Activated CD8-positive, alpha-beta T cell treated with anti-CD3 and anti-CD28 coated beads, Interleukin-2, amount 10 ng/mL, durations not matched to agents 7 days and 5 days (primary cell): ENCODE measurements at regions of chrX and their contacts with region 1.

Region 1: DNA sequence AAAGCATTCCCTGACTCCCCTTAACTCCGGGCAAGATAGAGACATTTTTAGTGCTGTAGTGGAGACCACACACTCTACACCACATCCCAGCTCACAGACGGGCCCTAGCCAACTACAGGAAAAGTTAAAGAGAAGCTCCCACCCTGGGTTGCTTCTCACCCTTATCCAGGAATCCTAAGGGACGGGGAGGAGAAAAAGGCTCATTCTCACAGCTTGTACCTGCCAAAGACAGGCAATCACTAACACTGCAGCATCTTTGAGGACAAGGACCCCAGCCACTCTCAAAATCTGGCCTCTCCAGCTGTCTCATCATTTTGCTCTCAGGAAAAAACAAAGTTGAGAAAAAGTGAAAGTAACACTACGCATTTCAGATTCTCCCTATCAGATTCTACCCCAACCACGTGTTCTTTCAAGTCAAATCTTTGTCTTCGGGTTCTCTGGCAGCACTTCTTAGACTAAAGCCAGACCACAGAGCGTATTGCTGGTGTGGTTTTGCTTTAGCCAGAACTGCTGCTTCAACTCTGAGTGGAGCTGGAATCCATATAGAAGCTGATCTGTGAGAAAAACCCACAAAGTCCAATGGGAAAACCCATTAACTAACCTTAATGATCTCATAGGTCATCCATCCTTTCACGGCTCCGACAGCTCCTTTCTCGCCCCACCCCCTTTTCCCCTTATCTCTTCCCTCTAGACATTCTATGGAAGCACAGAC is 605.9 kb upstream of the DIPK2B start:
- DNase-seq: peak; percentile 68
- ATAC-seq: peak; percentile 85
- H3K4me3 Mint-ChIP-seq: peak overlapping the region; percentile 74
- H3K27ac Mint-ChIP-seq: peak overlapping the region; percentile 92
- H3K4me1 Mint-ChIP-seq: peaks cover 78% of the 10 kb centered on the region
- H3K27me3 Mint-ChIP-seq: no peaks in the 10 kb centered on the region

Region 2: GRCh38 chrX:45621376-45622041 is 185.1 kb before region 1 on chrX:
- CTCF ChIA-PET with region 1: no interaction called
- POLR2A ChIA-PET with region 1: no interaction called
- DNase-seq: no peak
- ATAC-seq: no peak
- H3K4me3 Mint-ChIP-seq: no peak overlapping the region
- H3K27ac Mint-ChIP-seq: no peak overlapping the region
- H3K4me1 Mint-ChIP-seq: peaks cover 4% of the 10 kb centered on the region
- H3K27me3 Mint-ChIP-seq: no peaks in the 10 kb centered on the region

Region 3: DNA sequence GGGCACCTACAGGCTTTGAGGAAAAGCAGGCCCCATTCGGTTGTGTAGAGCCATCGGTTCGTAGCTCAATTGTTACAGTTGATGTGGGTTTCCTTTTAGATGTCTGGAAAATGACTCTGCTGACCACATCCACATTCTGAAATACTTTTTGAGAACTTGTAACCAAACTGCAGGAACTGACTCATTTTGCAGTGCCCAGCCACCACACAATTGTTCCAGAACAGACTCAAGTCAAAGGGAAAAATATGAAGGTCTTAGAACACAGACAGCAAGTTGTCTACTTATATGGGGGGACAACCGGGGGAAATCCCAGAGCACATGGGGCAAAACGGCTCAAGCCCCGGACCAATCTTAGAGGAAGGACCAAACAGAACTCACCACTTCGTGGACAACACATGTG is 48.2 kb before region 1 on chrX:
- CTCF ChIA-PET with region 1: interaction called, 7 read pairs
- POLR2A ChIA-PET with region 1: interaction called, 15 read pairs
- DNase-seq: peak; percentile 67
- ATAC-seq: peak; percentile 52
- H3K4me3 Mint-ChIP-seq: peak overlapping the region; percentile 79
- H3K27ac Mint-ChIP-seq: peak overlapping the region; percentile 93
- H3K4me1 Mint-ChIP-seq: peaks cover 68% of the 10 kb centered on the region
- H3K27me3 Mint-ChIP-seq: no peaks in the 10 kb centered on the region

Region 4: DNA sequence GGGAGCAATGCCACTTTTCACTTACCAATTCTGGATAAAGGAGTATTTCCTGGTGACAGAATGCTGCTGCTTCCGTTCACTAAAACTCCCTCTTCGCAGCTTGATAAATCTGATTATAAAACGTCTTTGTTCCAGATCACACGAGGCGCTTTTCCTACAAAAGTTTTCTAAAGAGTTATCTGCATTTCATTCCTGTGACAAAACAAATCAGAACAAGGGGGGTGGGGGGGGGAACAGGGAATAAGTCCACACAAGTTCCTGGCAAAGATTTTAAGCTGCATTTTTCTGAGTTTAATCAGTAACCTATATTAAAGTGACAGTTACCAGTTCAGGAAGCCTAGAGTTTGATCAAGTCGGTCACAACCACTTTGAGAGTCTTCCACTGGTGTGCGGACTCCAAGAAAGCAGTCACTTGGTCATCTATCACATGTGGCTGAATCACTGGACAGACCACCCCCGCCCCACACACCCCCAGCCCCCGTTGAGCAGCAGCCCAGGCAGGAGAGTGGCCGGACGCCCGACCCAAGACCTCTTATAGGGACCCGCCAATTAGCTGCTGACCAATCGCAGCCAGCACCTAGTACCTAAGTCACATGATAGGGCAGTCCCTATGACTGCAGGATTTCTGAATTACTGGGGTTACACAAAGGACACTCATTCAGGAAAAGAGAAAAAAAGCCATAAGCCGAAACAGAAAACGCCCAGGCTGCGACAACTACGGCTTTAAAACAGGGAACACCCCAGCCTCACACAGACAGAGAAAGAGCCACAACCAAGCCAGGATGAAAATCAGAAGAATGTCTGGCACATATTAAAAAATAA is 36.6 kb before region 1 on chrX:
- CTCF ChIA-PET with region 1: interaction called, 20 read pairs
- POLR2A ChIA-PET with region 1: interaction called, 27 read pairs
- DNase-seq: peak; percentile 69
- ATAC-seq: peak; percentile 67
- H3K4me3 Mint-ChIP-seq: peak overlapping the region; percentile 85
- H3K27ac Mint-ChIP-seq: peak overlapping the region; percentile 91
- H3K4me1 Mint-ChIP-seq: peaks cover 54% of the 10 kb centered on the region
- H3K27me3 Mint-ChIP-seq: no peaks in the 10 kb centered on the region

Region 5: GRCh38 chrX:45843518-45843917 is 37.0 kb after region 1 on chrX:
- CTCF ChIA-PET with region 1: interaction called, 68 read pairs
- POLR2A ChIA-PET with region 1: interaction called, 3 read pairs
- DNase-seq: peak; percentile 33
- ATAC-seq: no peak
- H3K4me3 Mint-ChIP-seq: no peak overlapping the region
- H3K27ac Mint-ChIP-seq: no peak overlapping the region
- H3K4me1 Mint-ChIP-seq: peaks cover 44% of the 10 kb centered on the region
- H3K27me3 Mint-ChIP-seq: no peaks in the 10 kb centered on the region

Region 6: DNA sequence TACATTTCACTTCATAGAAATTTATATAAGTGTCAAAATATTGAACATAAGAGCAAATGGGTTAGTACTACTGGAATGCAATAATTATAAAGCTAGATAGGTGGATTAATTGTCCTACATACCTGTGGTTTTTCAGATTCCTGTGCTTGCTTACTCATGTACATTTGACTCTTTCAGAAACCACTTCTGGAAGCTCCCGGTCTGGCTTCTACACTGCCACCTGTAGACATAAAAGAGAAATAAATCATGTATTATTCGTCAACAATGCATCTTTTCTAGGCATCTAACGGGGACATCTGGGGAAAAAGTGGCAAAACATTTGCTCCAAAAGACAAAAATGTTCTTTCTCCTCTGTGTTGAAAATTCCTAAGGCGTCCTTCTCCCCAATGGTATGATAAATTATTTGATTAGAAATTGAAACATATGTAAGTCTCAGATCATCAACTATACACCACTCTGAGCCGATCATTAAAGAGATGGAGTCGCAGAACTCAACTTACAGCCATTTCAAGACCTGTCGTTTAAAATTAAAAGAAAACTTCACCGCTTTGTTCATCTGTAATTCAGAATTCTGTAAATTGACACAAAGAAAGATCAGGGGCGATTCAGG is 42.8 kb after region 1 on chrX:
- CTCF ChIA-PET with region 1: interaction called, 68 read pairs
- POLR2A ChIA-PET with region 1: interaction called, 12 read pairs
- DNase-seq: peak; percentile 38
- ATAC-seq: no peak
- H3K4me3 Mint-ChIP-seq: peak overlapping the region; percentile 93
- H3K27ac Mint-ChIP-seq: peak overlapping the region; percentile 41
- H3K4me1 Mint-ChIP-seq: peaks cover 41% of the 10 kb centered on the region
- H3K27me3 Mint-ChIP-seq: no peaks in the 10 kb centered on the region

Region 7: GRCh38 chrX:45935408-45935807 is 128.8 kb after region 1 on chrX:
- CTCF ChIA-PET with region 1: no interaction called
- POLR2A ChIA-PET with region 1: no interaction called
- DNase-seq: no peak
- ATAC-seq: no peak
- H3K4me3 Mint-ChIP-seq: no peak overlapping the region
- H3K27ac Mint-ChIP-seq: no peak overlapping the region
- H3K4me1 Mint-ChIP-seq: no peaks in the 10 kb centered on the region
- H3K27me3 Mint-ChIP-seq: no peaks in the 10 kb centered on the region

Region 8: GRCh38 chrX:46036508-46036907 is 229.9 kb after region 1 on chrX:
- CTCF ChIA-PET with region 1: no interaction called
- POLR2A ChIA-PET with region 1: no interaction called
- DNase-seq: no peak
- ATAC-seq: no peak
- H3K4me3 Mint-ChIP-seq: no peak overlapping the region
- H3K27ac Mint-ChIP-seq: no peak overlapping the region
- H3K4me1 Mint-ChIP-seq: no peaks in the 10 kb centered on the region
- H3K27me3 Mint-ChIP-seq: no peaks in the 10 kb centered on the region

Region 9: DNA sequence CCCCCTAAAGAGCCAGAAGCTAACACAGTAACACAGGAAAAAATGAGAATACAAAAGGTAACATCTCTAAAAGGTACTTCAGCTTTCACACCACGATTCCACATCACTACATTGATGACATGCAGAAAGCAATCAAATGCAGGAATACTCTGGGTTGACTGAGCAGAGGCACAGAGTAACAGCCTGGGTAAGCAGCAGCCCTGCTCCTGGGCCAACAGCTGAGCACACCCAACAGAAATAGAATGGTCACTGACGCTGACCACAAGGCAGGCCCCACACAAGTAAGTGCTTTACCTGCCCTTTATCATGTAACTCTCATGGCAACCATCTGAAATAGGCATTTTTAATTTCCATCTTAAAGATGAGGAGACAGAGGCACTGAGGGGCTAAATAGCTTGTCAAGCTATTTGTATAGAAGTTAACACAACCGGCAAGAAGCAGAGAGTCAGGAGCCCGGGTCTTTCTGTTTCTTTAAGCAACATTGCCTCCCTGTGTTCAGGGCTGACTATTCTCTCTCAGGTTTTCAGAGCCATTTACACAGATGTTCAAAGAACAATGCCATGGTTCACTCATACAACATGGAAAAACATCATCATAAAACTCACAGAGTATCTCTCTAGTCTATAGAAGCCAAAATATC is 569.8 kb after region 1 on chrX:
- CTCF ChIA-PET with region 1: interaction called, 11 read pairs
- POLR2A ChIA-PET with region 1: no interaction called
- DNase-seq: peak; percentile 28
- ATAC-seq: no peak
- H3K4me3 Mint-ChIP-seq: no peak overlapping the region
- H3K27ac Mint-ChIP-seq: no peak overlapping the region
- H3K4me1 Mint-ChIP-seq: no peaks in the 10 kb centered on the region
- H3K27me3 Mint-ChIP-seq: peaks cover 3% of the 10 kb centered on the region

Region 10: GRCh38 chrX:46686003-46686645 is 879.6 kb after region 1 on chrX:
- CTCF ChIA-PET with region 1: no interaction called
- POLR2A ChIA-PET with region 1: no interaction called
- DNase-seq: peak; percentile 60
- ATAC-seq: no peak
- H3K4me3 Mint-ChIP-seq: no peak overlapping the region
- H3K27ac Mint-ChIP-seq: no peak overlapping the region
- H3K4me1 Mint-ChIP-seq: peaks cover 7% of the 10 kb centered on the region
- H3K27me3 Mint-ChIP-seq: no peaks in the 10 kb centered on the region